ENCODE measurements at regions of chr14 and their contacts with region 1.

Region 1: GRCh38 chr14:30270200-30271161 is 288.5 kb upstream of the G2E3 start:
- DNase-seq: peak; percentile 54 to 79 (median 62)
- ATAC-seq: peak; percentile 100
- H3K4me3 ChIP-seq: peak overlapping the region; percentile 16; the same call in 1 of the 2 replicates
- H3K27ac ChIP-seq: no peak overlapping the region
- H3K4me1 ChIP-seq: no peaks in the 10 kb centered on the region
- H3K27me3 ChIP-seq: no peaks in the 10 kb centered on the region
- CTCF ChIP-seq: peak; percentile 74 to 87 (median 76)
- EP300 ChIP-seq: no peak
- POLR2A ChIP-seq: no peak
- RAD21 ChIP-seq: peak; percentile 42 to 65; a peak in 2 of 4 replicates

Region 2: GRCh38 chr14:30180219-30180618 is 90.3 kb before region 1 on chr14:
- CTCF ChIA-PET with region 1: no interaction called
- POLR2A ChIA-PET with region 1: no interaction called
- in situ Hi-C with region 1: no loop called
- intact Hi-C with region 1: no loop called
- DNase-seq: no peak
- ATAC-seq: no peak
- H3K4me3 ChIP-seq: no peak overlapping the region
- H3K27ac ChIP-seq: no peak overlapping the region
- H3K4me1 ChIP-seq: no peaks in the 10 kb centered on the region
- H3K27me3 ChIP-seq: no peaks in the 10 kb centered on the region
- CTCF ChIP-seq: no peak
- EP300 ChIP-seq: no peak
- POLR2A ChIP-seq: no peak
- RAD21 ChIP-seq: no peak

Region 3: DNA sequence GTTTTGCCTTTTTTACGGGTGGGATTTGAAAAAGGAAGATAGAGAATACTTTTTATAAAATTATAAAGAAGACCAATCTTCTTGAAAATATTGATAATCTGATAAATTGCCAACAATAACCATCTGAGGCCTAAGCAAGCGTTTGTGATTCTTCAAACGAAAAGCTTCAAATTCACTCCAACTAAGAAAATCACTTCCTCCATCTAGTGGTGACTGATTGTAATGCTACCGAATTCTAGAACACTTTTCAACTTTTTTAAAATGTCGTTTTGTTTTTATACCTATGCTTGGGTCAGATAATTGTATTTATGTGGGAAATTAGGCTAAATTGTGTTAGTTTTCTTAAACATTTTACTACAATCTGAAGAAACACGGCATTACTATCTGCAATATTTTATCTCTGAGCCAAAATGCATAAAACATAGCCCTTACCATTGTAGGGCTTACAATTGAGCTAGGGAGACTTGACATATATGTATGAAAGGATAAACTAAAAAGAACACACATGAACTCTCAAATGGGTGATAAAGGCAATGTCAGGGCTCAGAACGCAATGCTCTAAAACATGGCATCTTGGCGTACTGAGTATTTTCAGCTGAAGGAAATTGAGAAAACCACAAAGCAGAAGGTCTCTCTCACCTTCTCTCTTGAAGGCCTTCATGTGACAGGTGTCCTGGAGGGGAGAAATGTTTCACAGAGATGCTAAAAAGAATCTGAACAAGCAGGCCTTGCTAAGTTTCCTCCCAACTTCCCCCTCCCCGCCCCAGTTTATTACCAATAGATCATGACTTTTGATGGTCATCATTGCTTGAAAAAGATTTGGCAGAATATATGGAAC is 251.6 kb after region 1 on chr14:
- CTCF ChIA-PET with region 1: no interaction called
- POLR2A ChIA-PET with region 1: no interaction called
- in situ Hi-C with region 1: no loop called
- intact Hi-C with region 1: loop called (anchors 1 kb)
- DNase-seq: peak; percentile 20 to 49 (median 26)
- ATAC-seq: 0 out of 3 replicates have a peak, but pooled peaks have one; percentile 41
- H3K4me3 ChIP-seq: no peak overlapping the region
- H3K27ac ChIP-seq: no peak overlapping the region
- H3K4me1 ChIP-seq: no peaks in the 10 kb centered on the region
- H3K27me3 ChIP-seq: no peaks in the 10 kb centered on the region
- CTCF ChIP-seq: peak; percentile 26 to 76 (median 36); a peak in 4 of 6 replicates
- EP300 ChIP-seq: no peak
- POLR2A ChIP-seq: no peak
- RAD21 ChIP-seq: peak; percentile 65 to 77

Measured in K562 (cell line).